Activated B cell treated with CpG ODN at 0.5 μM for 24 hours (primary cell): ENCODE measurements at regions of chr14 and their contacts with region 1.

Region 1: GRCh38 chr14:35808076-35808652 is 931 bp downstream of the RALGAPA1 start:
- DNase-seq: no peak
- ATAC-seq: no peak
- H3K4me3 Mint-ChIP-seq: peak overlapping the region; percentile 95
- H3K27ac Mint-ChIP-seq: peak overlapping the region; percentile 87
- H3K4me1 Mint-ChIP-seq: peaks cover 31% of the 10 kb centered on the region
- H3K27me3 Mint-ChIP-seq: no peaks in the 10 kb centered on the region
- CTCF ChIP-seq: no peak

Region 2: GRCh38 chr14:34461334-34462131 is 1346.6 kb before region 1 on chr14:
- CTCF ChIA-PET with region 1: no interaction called
- POLR2A ChIA-PET with region 1: no interaction called
- intact Hi-C with region 1: loop called (anchors 5 kb)
- DNase-seq: no peak
- ATAC-seq: no peak
- H3K4me3 Mint-ChIP-seq: peak overlapping the region; percentile 88
- H3K27ac Mint-ChIP-seq: peak overlapping the region; percentile 76
- H3K4me1 Mint-ChIP-seq: peaks cover 15% of the 10 kb centered on the region
- H3K27me3 Mint-ChIP-seq: no peaks in the 10 kb centered on the region
- CTCF ChIP-seq: no peak

Region 3: GRCh38 chr14:35285168-35286002 is 522.8 kb before region 1 on chr14:
- CTCF ChIA-PET with region 1: no interaction called
- POLR2A ChIA-PET with region 1: no interaction called
- intact Hi-C with region 1: loop called (anchors 5 kb)
- DNase-seq: no peak
- ATAC-seq: peak; percentile 81
- H3K4me3 Mint-ChIP-seq: peak overlapping the region; percentile 80
- H3K27ac Mint-ChIP-seq: peak overlapping the region; percentile 90
- H3K4me1 Mint-ChIP-seq: peaks cover 52% of the 10 kb centered on the region
- H3K27me3 Mint-ChIP-seq: no peaks in the 10 kb centered on the region
- CTCF ChIP-seq: no peak

Region 4: DNA sequence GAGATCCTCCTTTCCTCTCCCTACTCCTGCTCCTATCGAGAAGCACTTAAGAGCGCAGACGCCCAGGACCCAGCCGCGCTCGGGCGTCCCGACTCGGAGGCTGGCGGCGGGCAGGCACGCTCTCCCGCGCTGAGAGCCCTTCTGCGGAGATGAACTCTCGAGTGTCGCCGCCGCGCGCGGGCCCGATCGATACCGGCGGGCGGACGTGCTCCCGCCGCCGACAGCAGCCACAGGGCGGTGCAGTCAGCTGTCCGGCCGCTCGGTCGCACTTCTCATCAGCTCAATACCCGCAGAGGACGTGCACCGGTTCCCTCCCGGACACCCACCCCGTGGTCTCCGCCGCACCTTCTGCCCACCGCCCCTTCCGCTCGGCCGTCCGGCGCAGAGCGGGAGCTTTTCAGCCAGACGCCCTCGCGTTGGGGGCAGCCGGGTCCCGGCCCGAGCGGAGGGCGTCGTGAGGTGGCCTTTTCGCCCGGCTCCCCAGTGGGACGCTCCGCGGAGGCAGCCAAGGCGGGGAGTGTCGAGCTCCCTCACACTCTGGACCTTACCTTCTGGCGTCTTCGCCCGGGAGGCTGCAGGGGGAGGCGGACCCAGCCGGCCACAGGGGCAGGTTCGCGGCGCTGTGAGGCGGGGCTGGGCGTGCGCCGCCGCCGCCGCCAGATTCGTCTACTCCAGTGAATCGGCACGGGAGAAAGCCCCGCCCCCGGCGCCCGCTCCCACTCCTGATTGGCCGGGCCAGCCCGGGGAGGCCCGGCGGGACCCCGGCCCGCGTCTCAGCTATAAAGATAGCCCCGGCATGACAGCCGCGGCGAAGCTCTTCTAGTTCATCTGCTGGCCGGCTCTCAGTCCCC is 274.6 kb before region 1 on chr14 and contains the start of gene INSM2:
- CTCF ChIA-PET with region 1: no interaction called
- POLR2A ChIA-PET with region 1: interaction called, 3 read pairs
- intact Hi-C with region 1: loop called (anchors 10 kb)
- DNase-seq: peak; percentile 55
- ATAC-seq: peak; percentile 76
- H3K4me3 Mint-ChIP-seq: peak within 1 kb of the TSS; percentile 81
- H3K27ac Mint-ChIP-seq: no peak within 1 kb of the TSS
- H3K4me1 Mint-ChIP-seq: peaks cover 16% of the 10 kb centered on the region
- H3K27me3 Mint-ChIP-seq: peaks cover 41% of the 10 kb centered on the region
- CTCF ChIP-seq: no peak
- total RNA-seq, gene INSM2: not detected in 2 replicates

Region 5: GRCh38 chr14:35776823-35777222 is 31.3 kb before region 1 on chr14:
- CTCF ChIA-PET with region 1: no interaction called
- POLR2A ChIA-PET with region 1: no interaction called
- intact Hi-C with region 1: loop called (anchors 1 kb)
- DNase-seq: no peak
- ATAC-seq: no peak
- H3K4me3 Mint-ChIP-seq: no peak overlapping the region
- H3K27ac Mint-ChIP-seq: no peak overlapping the region
- H3K4me1 Mint-ChIP-seq: no peaks in the 10 kb centered on the region
- H3K27me3 Mint-ChIP-seq: no peaks in the 10 kb centered on the region
- CTCF ChIP-seq: no peak

Region 6: GRCh38 chr14:35973770-35974169 is 165.6 kb after region 1 on chr14:
- CTCF ChIA-PET with region 1: no interaction called
- POLR2A ChIA-PET with region 1: no interaction called
- intact Hi-C with region 1: no loop called
- DNase-seq: no peak
- ATAC-seq: no peak
- H3K4me3 Mint-ChIP-seq: no peak overlapping the region
- H3K27ac Mint-ChIP-seq: no peak overlapping the region
- H3K4me1 Mint-ChIP-seq: no peaks in the 10 kb centered on the region
- H3K27me3 Mint-ChIP-seq: no peaks in the 10 kb centered on the region
- CTCF ChIP-seq: no peak

Region 7: GRCh38 chr14:36320200-36320896 is 512.2 kb after region 1 on chr14 and contains the start of gene MBIP:
- CTCF ChIA-PET with region 1: no interaction called
- POLR2A ChIA-PET with region 1: no interaction called
- intact Hi-C with region 1: loop called (anchors 2 kb)
- DNase-seq: peak; percentile 55
- ATAC-seq: peak; percentile 99
- H3K4me3 Mint-ChIP-seq: peak within 1 kb of the TSS; percentile 97
- H3K27ac Mint-ChIP-seq: peak within 1 kb of the TSS; percentile 89
- H3K4me1 Mint-ChIP-seq: peaks cover 23% of the 10 kb centered on the region
- H3K27me3 Mint-ChIP-seq: peaks cover 15% of the 10 kb centered on the region
- CTCF ChIP-seq: no peak
- total RNA-seq, gene MBIP: 17.0 and 21.7 TPM in 2 replicates